Mammary epithelial cell (primary cell): ENCODE measurements at regions of chr5 and their contacts with region 1.

Region 1: DNA sequence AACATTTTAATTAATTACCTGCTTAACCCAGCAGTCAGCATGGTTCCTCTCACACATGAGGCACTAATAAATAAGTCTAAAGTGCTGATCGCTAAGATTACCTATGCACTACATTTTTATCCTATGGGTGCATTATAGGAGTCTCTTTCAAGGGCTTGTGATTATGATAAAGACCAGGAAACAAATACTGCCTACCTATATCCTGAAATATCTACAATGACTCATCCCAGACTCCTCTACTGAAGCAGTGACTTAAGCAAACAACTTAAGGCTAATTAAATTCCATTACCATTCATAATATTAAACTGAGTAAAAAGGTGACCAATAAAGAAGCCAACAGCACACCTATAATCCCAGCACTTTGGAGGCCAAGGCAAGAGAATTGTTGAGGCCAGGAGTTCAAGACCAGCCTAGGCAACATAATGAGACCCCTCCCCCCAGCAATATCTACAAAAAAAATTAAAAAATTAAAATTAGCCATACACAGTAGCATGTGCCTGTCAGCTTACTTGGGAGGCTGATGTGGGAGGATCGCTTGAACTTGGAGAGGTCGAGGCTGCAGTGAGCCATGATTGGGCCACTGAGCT is 338.4 kb downstream of the DNAH5 start:
- DNase-seq: peak; percentile 78
- H3K4me3 ChIP-seq: no peak overlapping the region
- H3K27ac ChIP-seq: no peak overlapping the region
- H3K4me1 ChIP-seq: peaks cover 18% of the 10 kb centered on the region
- H3K27me3 ChIP-seq: no peaks in the 10 kb centered on the region
- CTCF ChIP-seq: no peak

Region 2: GRCh38 chr5:13510616-13511015 is 95.5 kb before region 1 on chr5:
- CTCF ChIA-PET with region 1: no interaction called
- dilution Hi-C with region 1: no loop called
- in situ Hi-C with region 1: no loop called
- intact Hi-C with region 1: loop called (anchors 5 kb)
- DNase-seq: peak; percentile 96
- H3K4me3 ChIP-seq: no peak overlapping the region
- H3K27ac ChIP-seq: peak overlapping the region; percentile 81
- H3K4me1 ChIP-seq: peaks cover 37% of the 10 kb centered on the region
- H3K27me3 ChIP-seq: no peaks in the 10 kb centered on the region
- CTCF ChIP-seq: no peak